Mammary epithelial cell (primary cell): ENCODE measurements at regions of chr3 and their contacts with region 1.

Region 1: DNA sequence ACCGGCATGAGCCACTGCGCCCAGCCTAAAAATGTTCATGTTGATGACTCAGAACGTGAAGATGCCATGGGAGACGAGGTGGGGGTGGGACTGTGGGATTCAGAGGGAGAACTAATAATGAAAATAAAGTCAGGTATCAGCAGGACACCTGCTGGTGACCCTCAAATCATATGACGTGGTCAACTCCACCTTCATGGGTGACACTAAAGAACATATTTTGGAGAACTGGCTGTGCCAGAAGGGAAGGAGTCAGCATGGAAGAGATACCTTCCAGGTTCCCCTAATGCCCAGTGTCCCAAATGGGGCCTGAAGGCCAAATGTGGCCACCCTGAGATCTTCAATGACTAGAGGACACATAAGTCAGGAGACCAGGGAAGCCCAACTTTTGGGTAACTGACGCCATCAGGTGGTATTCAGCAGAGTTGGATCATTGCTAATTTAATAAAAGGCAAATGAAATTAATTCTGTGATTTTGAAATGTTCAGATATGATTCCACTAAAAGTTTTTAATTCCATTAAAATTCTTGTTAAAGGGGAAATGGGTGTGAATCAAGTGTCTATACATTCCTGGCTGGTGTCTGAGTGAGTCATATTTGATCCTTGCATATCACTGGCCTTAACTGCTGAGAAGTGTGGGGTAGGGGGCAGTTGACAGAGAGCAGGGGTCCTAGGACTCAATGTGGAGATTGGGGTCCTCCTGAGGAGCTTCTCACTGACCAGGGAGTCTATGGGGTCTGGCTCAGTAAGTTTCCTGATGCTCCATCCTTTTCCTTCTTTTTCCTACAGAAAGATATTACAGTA is 88.7 kb upstream of the GSK3B start:
- DNase-seq: peak; percentile 60
- H3K4me3 ChIP-seq: no peak overlapping the region
- H3K27ac ChIP-seq: no peak overlapping the region
- H3K4me1 ChIP-seq: peaks cover 31% of the 10 kb centered on the region
- H3K27me3 ChIP-seq: no peaks in the 10 kb centered on the region
- CTCF ChIP-seq: peak; percentile 50 to 55

Region 2: GRCh38 chr3:119891944-119892721 is 290.8 kb before region 1 on chr3:
- CTCF ChIA-PET with region 1: no interaction called
- dilution Hi-C with region 1: no loop called
- in situ Hi-C with region 1: loop called in 1 of 2 experiments (anchors 5 kb)
- intact Hi-C with region 1: loop called (anchors 1 kb)
- DNase-seq: peak; percentile 56
- H3K4me3 ChIP-seq: no peak overlapping the region
- H3K27ac ChIP-seq: no peak overlapping the region
- H3K4me1 ChIP-seq: peaks cover 4% of the 10 kb centered on the region
- H3K27me3 ChIP-seq: no peaks in the 10 kb centered on the region
- CTCF ChIP-seq: peak; percentile 65 to 67

Region 3: DNA sequence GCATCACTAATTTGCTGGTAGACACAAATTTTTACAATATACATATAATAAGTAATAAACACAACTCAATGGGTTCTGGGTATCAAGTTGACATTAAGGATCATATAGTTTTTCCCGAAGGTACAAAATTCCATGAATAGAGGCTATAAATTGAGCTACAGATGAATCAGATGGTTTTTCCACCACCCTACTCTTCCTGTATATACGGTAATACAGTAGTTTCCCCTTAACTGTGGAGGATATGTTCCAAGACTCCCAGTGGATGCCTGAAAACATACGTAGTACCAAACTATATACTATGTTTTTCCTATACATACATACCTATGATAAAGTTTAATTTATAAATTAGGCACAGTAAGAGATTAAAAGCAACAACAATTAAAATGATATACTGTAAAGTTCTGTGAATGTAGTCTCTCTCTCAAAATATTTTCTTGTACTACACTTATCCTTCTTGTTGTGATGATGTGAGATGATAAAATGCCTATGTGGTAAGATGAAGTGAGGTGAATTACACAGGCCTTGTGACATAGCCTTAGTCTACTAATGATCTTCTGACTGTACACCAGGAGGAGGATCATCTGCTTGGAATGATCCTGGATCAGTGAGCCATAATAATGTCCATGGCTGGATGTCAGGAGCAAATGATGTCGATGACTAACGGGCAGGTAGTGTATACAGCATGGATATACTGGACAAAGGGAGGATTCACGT is 284.3 kb before region 1 on chr3:
- CTCF ChIA-PET with region 1: no interaction called
- dilution Hi-C with region 1: no loop called
- in situ Hi-C with region 1: loop called in 1 of 2 experiments (anchors 5 kb)
- intact Hi-C with region 1: no loop called
- DNase-seq: peak; percentile 63
- H3K4me3 ChIP-seq: no peak overlapping the region
- H3K27ac ChIP-seq: no peak overlapping the region
- H3K4me1 ChIP-seq: no peaks in the 10 kb centered on the region
- H3K27me3 ChIP-seq: no peaks in the 10 kb centered on the region
- CTCF ChIP-seq: no peak

Region 4: DNA sequence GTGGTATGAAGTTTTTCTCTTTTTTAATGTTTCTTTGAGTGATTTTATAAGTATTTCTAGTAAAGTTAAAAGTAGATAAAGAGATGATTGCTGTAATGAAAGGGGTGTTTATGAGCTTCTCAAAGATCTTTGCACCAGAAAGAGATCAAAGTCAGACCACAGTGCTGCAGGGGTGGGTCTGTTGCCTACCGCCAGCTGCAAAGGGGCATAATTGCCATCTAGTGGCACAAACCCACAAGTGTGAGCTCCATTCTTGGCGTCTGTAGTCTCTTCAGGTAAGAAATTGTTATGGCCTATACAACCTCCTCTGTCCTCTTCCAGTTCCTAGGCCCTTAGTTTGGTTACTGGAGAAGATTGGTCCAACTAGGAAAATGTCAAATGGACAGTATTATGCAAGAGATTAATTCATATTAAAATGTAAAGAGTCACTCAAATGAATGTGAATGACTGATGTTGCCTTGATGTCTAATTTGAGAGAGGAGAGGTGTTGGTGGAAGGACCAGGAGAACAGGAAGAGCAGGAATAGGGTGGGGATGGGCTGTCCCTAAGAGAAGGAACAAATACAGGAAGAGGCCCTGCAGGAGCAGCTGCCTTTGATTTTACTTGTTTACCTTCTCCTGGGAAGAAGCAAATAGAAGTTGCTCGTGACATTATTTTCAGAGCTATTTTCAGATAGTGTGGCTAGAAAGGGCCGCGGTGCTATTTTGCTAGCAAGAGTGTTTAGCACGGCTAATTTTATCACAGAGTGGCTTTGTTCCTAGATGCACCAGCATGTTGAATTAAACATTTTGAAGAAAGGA is 35.7 kb before region 1 on chr3:
- CTCF ChIA-PET with region 1: no interaction called
- dilution Hi-C with region 1: no loop called
- in situ Hi-C with region 1: no loop called
- intact Hi-C with region 1: loop called (anchors 5 kb)
- DNase-seq: peak; percentile 61
- H3K4me3 ChIP-seq: no peak overlapping the region
- H3K27ac ChIP-seq: peak overlapping the region; percentile 96
- H3K4me1 ChIP-seq: peaks cover 58% of the 10 kb centered on the region
- H3K27me3 ChIP-seq: no peaks in the 10 kb centered on the region
- CTCF ChIP-seq: peak; percentile 33 to 46